B cell (primary cell): ENCODE measurements at regions of chr17 and their contacts with region 1.

Region 1: DNA sequence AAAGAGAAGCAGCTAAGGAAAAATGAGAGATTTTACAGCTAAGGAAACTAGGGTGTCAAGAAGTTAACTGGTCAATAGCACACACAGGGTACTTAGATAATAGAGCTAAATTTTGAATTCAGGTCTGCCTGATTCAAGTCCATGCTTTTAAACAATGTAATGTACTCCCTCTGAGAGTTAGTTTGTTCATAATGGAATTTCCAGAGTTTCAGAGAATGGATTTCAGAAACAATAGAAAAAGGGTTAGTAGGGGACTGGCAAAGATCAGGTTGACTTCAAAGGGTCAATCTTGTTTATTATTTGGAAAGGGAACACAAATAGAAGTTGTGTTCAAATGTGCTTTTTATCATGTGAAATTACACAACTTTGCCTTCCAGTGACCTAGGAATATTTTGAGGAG is 17.9 kb downstream of the NSRP1 start:
- DNase-seq: no peak
- ATAC-seq: no peak
- H3K4me3 ChIP-seq: no peak overlapping the region
- H3K4me3 Mint-ChIP-seq: no peak overlapping the region
- H3K27ac ChIP-seq: no peak overlapping the region
- H3K27ac Mint-ChIP-seq: no peak overlapping the region
- H3K4me1 ChIP-seq: no peaks in the 10 kb centered on the region
- H3K4me1 Mint-ChIP-seq: peaks cover 13% of the 10 kb centered on the region
- H3K27me3 ChIP-seq: no peaks in the 10 kb centered on the region
- H3K27me3 Mint-ChIP-seq: no peaks in the 10 kb centered on the region
- CTCF ChIP-seq: no peak

Region 2: GRCh38 chr17:29789196-29790170 is 345.1 kb before region 1 on chr17:
- CTCF ChIA-PET with region 1: no interaction called
- POLR2A ChIA-PET with region 1: interaction called, 14 read pairs
- intact Hi-C with region 1: no loop called
- DNase-seq: no peak
- ATAC-seq: no peak
- H3K4me3 ChIP-seq: no peak overlapping the region
- H3K4me3 Mint-ChIP-seq: no peak overlapping the region
- H3K27ac ChIP-seq: no peak overlapping the region
- H3K27ac Mint-ChIP-seq: no peak overlapping the region
- H3K4me1 ChIP-seq: peaks cover 3 to 8% of the 10 kb centered on the region in 2 donors
- H3K4me1 Mint-ChIP-seq: peaks cover 9% of the 10 kb centered on the region
- H3K27me3 ChIP-seq: no peaks in the 10 kb centered on the region
- H3K27me3 Mint-ChIP-seq: no peaks in the 10 kb centered on the region
- CTCF ChIP-seq: no peak

Region 3: DNA sequence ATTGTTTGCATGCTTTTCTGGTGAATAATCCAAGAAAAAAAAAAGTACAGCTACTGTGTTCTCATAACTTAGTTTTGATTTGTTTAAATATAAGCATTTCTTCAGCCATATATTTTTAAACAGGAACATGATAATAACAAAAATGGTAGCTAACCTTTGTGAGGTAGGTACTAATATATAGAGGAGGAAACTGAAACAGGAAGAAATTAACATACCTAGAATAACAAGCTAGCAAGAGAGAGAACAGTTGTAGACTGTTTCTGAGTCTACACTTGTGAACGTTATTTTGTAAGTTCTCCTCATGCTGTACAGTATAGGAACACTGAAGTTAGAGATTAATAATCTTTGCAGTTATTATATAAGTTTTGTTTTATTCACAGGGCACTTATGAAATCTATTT is 31.4 kb after region 1 on chr17:
- CTCF ChIA-PET with region 1: no interaction called
- POLR2A ChIA-PET with region 1: interaction called, 3 read pairs
- intact Hi-C with region 1: loop called (anchors 5 kb)
- DNase-seq: peak; percentile 23
- ATAC-seq: no peak
- H3K4me3 ChIP-seq: peak overlapping the region in 1 of 5 experiments; percentile 15
- H3K4me3 Mint-ChIP-seq: peak overlapping the region; percentile 15
- H3K27ac ChIP-seq: peak overlapping the region; percentile 4 to 67
- H3K27ac Mint-ChIP-seq: no peak overlapping the region
- H3K4me1 ChIP-seq: peaks cover 5 to 16% of the 10 kb centered on the region in 2 donors
- H3K4me1 Mint-ChIP-seq: peaks cover 28% of the 10 kb centered on the region
- H3K27me3 ChIP-seq: no peaks in the 10 kb centered on the region
- H3K27me3 Mint-ChIP-seq: no peaks in the 10 kb centered on the region
- CTCF ChIP-seq: no peak